GM10248 (cell line): ENCODE measurements at regions of chr11 and their contacts with region 1.

Region 1: DNA sequence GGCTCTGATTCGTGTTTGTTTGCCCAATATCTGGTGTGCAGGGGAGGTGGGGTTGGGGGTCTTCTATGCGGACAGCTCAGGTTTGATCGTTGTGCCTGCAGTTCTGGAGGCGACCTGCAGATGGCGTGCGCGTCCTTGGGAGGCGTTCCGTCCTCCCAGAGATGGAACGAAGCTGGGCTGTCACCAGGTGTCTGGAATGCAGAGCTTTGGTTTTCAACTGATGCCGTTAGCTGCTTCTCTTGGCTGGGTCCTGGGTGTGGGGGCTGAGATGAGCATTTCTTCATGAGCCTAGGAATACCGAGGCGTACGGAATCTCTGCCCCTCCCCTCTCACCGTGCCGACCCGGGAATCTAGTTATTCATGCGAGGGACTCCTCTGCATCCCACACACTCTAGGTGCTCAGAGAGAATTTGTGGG is 98.6 kb downstream of the CEP164 start:
- DNase-seq: peak; percentile 85
- CTCF ChIP-seq: peak; percentile 95

Region 2: DNA sequence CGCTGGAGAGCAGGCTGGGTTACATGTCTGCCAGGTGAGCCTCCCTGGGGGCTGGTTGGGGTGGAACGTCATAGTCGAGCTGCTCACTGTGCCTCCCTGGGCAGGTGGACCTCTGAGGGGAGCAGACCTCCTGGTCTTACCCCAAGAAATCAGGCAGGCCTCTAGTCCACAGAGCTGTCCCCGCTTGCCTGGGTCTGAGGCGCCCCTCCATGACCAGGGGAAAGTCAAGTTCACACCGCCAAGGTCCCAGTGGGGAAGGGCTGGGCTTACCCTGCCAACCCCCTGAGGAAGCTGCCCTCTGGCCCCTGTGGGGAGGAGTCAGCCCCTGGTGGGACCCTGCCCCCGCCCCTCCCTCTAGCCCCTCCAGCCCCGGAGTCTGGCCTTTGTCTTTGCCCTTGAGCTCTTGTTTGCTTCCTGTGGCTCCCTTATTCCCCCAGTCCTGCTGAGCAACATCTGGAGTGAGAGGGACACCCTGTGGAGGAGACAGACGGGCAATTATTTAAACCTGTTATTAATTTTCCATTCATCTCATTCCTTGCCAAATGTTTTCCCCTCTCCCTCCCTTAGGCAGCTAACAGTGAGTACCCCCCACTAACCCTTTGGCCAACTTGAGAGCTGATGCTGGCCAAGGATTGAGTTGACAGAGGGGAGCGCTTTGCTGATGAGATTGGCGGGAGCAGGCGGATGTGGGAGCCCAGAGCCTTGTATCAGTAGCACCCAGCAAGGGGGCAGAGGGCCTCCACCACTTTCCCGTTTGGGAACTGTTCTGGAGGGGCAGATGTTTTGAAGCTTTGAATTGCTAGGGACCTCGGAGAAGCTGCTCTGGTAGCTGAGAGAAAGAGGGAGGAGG is 15.2 kb before region 1 on chr11:
- CTCF ChIA-PET with region 1: interaction called, 89 read pairs
- POLR2A ChIA-PET with region 1: interaction called, 5 read pairs
- DNase-seq: no peak
- CTCF ChIP-seq: no peak

Region 3: DNA sequence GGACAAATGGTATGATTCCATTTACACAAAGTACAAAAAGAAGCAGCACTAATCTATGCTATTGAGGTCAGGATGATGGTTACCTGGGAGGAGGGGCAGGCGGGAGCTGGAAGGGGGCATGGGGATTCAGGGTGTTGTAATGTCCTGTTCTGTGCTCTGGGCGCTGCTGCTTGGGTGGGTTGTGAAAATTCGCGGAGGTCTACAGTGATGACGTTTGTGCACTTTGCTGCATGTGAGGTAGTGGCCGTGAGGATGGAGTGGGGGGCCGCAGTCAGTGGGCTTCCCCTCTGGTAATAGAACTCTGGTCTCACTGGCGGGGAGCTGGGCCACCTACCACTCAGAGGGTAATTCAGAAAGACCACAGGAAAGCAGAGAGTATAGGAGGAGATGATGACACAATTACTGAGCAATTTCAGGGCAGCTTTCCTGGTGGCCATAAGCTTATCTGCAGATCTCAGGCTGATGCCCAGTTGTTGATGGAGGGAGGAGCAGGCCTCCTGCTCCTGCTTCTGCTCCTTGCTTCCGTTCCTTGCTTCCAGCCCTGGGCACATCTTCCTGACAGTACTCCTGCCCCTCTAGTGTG is 22.9 kb after region 1 on chr11:
- CTCF ChIA-PET with region 1: interaction called, 31 read pairs
- POLR2A ChIA-PET with region 1: no interaction called
- DNase-seq: no peak
- CTCF ChIP-seq: no peak

Region 4: DNA sequence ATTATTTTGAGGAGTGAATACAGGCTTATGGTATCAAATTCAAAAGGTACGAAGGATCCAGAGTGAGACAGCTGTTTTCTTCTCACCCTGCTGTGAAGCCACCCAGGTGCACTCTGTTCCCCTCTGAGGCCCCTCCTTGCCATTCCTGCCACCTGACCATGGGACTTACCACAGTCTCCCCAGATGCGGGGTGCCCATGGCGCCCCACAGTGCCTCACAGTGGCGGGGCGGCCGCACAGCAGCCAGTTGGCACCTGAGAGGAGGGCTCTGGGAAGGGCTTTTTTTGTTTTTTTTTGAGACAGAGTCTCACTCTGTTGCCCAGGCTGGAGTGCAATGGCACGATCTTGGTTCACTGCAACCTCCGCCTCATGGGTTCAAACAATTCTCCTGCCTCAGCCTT is 53.1 kb after region 1 on chr11:
- CTCF ChIA-PET with region 1: interaction called, 32 read pairs
- POLR2A ChIA-PET with region 1: no interaction called
- DNase-seq: peak; percentile 45
- CTCF ChIP-seq: peak; percentile 27

Region 5: DNA sequence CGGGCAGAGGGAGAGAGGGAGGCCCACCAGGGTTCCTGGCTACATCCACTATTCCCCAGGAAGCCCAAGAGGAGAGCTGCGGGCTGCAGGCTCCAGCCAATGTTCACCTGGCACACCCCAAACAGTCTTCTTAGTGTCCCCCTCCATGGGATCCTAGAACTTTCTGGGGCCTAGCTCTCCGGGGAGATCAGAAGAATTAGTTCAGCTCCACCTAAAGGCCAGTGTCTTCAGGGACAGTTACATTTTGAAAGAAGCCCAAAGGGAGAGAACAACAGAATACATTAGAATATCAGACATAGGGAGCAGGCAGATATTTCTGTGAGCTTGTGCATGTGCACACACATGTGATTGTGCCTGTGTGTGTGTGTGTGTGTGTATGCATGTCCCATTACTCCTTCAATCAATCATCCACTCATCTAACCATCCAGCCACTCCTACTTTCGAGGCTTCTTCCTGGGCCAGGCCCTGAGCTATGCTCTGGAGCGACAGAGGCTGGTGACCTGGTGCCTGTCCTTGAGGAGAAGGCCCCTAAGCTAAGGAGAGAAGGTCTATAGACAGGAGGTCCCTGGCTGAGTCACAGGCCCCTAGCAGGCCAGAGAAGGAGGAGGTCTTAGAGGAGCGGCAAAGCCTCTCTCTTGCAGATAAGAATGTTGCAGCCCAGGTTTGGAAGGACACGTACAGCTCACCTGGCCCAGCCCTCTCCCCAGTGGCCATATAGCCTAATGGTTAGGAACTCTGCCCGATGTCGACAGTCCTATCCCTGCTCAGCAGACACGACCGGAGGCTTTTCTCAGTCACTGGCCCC is 205.3 kb after region 1 on chr11:
- CTCF ChIA-PET with region 1: interaction called, 13 read pairs
- POLR2A ChIA-PET with region 1: no interaction called
- DNase-seq: no peak
- CTCF ChIP-seq: no peak

Region 6: GRCh38 chr11:117817368-117818040 is 391.2 kb after region 1 on chr11:
- CTCF ChIA-PET with region 1: interaction called, 70 read pairs
- POLR2A ChIA-PET with region 1: no interaction called
- DNase-seq: peak; percentile 70
- CTCF ChIP-seq: peak; percentile 96